ENCODE measurements at regions of chr11 and their contacts with region 1.

Region 1: GRCh38 chr11:78564490-78565467 is 9.9 kb downstream of the NARS2 start:
- DNase-seq: peak; percentile 80
- ATAC-seq: peak; percentile 65
- H3K4me3 ChIP-seq: no peak overlapping the region
- H3K4me3 Mint-ChIP-seq: no peak overlapping the region
- H3K27ac ChIP-seq: no peak overlapping the region
- H3K27ac Mint-ChIP-seq: no peak overlapping the region
- H3K4me1 ChIP-seq: peaks cover 17% of the 10 kb centered on the region in 2 donors
- H3K4me1 Mint-ChIP-seq: peaks cover 28% of the 10 kb centered on the region
- H3K27me3 ChIP-seq: no peaks in the 10 kb centered on the region
- H3K27me3 Mint-ChIP-seq: no peaks in the 10 kb centered on the region
- CTCF ChIP-seq: peak; percentile 84

Region 2: GRCh38 chr11:78045851-78046485 is 518.8 kb before region 1 on chr11:
- CTCF ChIA-PET with region 1: interaction called, 8 read pairs
- POLR2A ChIA-PET with region 1: no interaction called
- intact Hi-C with region 1: loop called (anchors 1 kb)
- DNase-seq: peak; percentile 78
- ATAC-seq: peak; percentile 91
- H3K4me3 ChIP-seq: peak overlapping the region in 4 of 5 experiments; percentile 9 to 53 (median 30)
- H3K4me3 Mint-ChIP-seq: peak overlapping the region; percentile 79
- H3K27ac ChIP-seq: no peak overlapping the region
- H3K27ac Mint-ChIP-seq: no peak overlapping the region
- H3K4me1 ChIP-seq: peaks cover 4% of the 10 kb centered on the region in 2 donors
- H3K4me1 Mint-ChIP-seq: peaks cover 10% of the 10 kb centered on the region
- H3K27me3 ChIP-seq: peaks cover 0 to 3% (median 0%) of the 10 kb centered on the region in 4 experiments
- H3K27me3 Mint-ChIP-seq: peaks cover 10% of the 10 kb centered on the region
- CTCF ChIP-seq: peak; percentile 98

Region 3: GRCh38 chr11:78228467-78228866 is 336.3 kb before region 1 on chr11:
- CTCF ChIA-PET with region 1: interaction called, 180 read pairs
- POLR2A ChIA-PET with region 1: interaction called, 10 read pairs
- intact Hi-C with region 1: loop called (anchors 1 kb)
- DNase-seq: peak; percentile 73
- ATAC-seq: peak; percentile 79
- H3K4me3 ChIP-seq: no peak overlapping the region
- H3K4me3 Mint-ChIP-seq: no peak overlapping the region
- H3K27ac ChIP-seq: peak overlapping the region in 1 of 2 donors; percentile 2
- H3K27ac Mint-ChIP-seq: no peak overlapping the region
- H3K4me1 ChIP-seq: peaks cover 38 to 42% of the 10 kb centered on the region in 2 donors
- H3K4me1 Mint-ChIP-seq: peaks cover 52% of the 10 kb centered on the region
- H3K27me3 ChIP-seq: no peaks in the 10 kb centered on the region
- H3K27me3 Mint-ChIP-seq: no peaks in the 10 kb centered on the region
- CTCF ChIP-seq: peak; percentile 78

Region 4: DNA sequence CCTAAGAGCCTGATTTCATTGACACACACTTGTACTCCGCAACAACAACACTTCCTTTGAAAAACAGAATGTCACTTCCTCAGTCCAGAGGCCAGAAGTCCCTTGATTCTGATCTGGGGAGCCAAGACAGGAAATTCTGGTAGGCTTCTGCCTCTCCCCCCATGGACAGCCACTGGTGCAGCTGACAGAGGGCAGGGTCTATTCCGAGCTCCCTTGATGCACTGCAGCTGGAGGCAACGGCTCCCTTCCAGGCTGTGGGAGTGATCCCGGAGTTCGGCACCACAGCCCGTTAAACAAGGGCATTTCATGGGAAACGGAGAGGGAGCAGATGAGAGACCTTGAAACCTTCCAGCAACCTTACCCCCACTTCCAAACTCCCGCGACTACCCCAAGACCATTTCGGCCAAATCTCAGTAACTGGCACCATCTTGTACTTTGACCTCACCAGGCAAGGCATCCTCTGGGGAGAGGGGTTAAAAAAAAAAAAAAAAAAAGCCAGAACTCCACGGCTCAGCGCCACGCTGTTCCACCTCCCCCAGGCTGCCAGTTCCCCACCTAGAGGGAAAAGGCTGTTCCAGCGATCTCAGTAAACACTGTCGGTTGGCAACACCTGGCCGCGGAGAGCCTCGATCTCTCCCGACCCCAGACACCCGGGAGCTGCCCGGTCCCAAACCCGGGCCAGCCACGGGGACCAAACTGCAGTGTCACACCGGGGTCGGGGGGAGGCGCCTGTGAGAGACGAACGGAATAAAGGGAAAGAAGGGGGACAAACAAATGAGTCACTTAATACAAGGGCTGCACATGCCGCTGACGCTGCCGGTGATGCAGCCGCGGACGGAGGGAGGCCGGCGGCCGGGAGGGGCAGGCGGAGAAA is 148.2 kb before region 1 on chr11:
- CTCF ChIA-PET with region 1: interaction called, 117 read pairs
- POLR2A ChIA-PET with region 1: interaction called, 3 read pairs
- intact Hi-C with region 1: loop called (anchors 1 kb)
- DNase-seq: peak; percentile 87
- ATAC-seq: peak; percentile 48
- H3K4me3 ChIP-seq: peak overlapping the region; percentile 35 to 84 (median 75)
- H3K4me3 Mint-ChIP-seq: peak overlapping the region; percentile 97
- H3K27ac ChIP-seq: peak overlapping the region; percentile 48 to 62
- H3K27ac Mint-ChIP-seq: peak overlapping the region; percentile 98
- H3K4me1 ChIP-seq: peaks cover 42 to 58% of the 10 kb centered on the region in 2 donors
- H3K4me1 Mint-ChIP-seq: peaks cover 74% of the 10 kb centered on the region
- H3K27me3 ChIP-seq: no peaks in the 10 kb centered on the region
- H3K27me3 Mint-ChIP-seq: no peaks in the 10 kb centered on the region
- CTCF ChIP-seq: peak; percentile 63

Region 5: DNA sequence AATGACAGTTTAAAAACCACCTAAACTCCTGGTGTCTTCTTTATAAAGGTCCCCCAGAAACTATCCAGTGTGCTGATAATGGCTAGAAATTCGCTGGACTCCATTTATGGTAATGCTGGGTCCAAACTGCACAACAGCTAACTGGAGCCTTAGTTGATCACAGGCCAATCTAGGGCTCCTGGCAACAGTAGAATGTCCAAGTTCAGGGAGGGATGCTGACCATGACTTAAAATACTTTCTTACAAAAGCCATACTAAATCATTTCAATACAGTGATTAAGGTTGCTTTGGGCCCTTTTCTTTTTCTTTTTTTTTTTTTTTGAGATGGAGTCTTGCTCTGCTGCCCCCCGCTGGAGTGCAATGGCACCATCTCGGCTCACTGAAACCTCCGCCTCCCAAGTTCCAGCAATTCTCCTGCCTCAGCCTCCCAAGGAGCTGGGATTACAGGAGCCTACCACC is 132.7 kb before region 1 on chr11:
- CTCF ChIA-PET with region 1: interaction called, 19 read pairs
- POLR2A ChIA-PET with region 1: interaction called, 3 read pairs
- intact Hi-C with region 1: no loop called
- DNase-seq: peak; percentile 44
- ATAC-seq: no peak
- H3K4me3 ChIP-seq: no peak overlapping the region
- H3K4me3 Mint-ChIP-seq: no peak overlapping the region
- H3K27ac ChIP-seq: no peak overlapping the region
- H3K27ac Mint-ChIP-seq: peak overlapping the region; percentile 20
- H3K4me1 ChIP-seq: peaks cover 34 to 38% of the 10 kb centered on the region in 2 donors
- H3K4me1 Mint-ChIP-seq: peaks cover 42% of the 10 kb centered on the region
- H3K27me3 ChIP-seq: no peaks in the 10 kb centered on the region
- H3K27me3 Mint-ChIP-seq: no peaks in the 10 kb centered on the region
- CTCF ChIP-seq: peak; percentile 72

Region 6: DNA sequence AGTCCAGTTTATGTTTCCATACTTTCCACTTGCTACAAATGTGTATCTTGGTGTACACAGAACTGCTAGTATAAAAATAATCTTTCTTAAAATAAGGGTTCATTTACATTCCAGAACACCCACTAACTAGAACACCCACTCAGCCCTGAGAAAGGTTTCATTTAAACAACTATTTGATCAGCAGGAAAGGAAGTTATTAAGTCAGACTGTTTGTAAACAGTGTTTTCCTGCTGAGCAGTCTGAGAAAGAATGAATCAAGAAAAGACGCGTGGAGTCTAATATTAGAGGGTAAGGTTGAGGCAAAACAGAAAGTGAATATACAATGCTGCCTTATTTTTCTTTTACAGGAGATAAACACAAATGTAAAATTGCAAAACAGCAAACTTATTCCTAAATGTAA is 22.8 kb before region 1 on chr11:
- CTCF ChIA-PET with region 1: interaction called, 14 read pairs
- POLR2A ChIA-PET with region 1: no interaction called
- intact Hi-C with region 1: no loop called
- DNase-seq: no peak
- ATAC-seq: no peak
- H3K4me3 ChIP-seq: no peak overlapping the region
- H3K4me3 Mint-ChIP-seq: peak overlapping the region; percentile 23
- H3K27ac ChIP-seq: peak overlapping the region in 1 of 2 donors; percentile 11
- H3K27ac Mint-ChIP-seq: no peak overlapping the region
- H3K4me1 ChIP-seq: peaks cover 13 to 14% of the 10 kb centered on the region in 2 donors
- H3K4me1 Mint-ChIP-seq: peaks cover 24% of the 10 kb centered on the region
- H3K27me3 ChIP-seq: no peaks in the 10 kb centered on the region
- H3K27me3 Mint-ChIP-seq: no peaks in the 10 kb centered on the region
- CTCF ChIP-seq: no peak